ENCODE measurements at regions of chr10 and their contacts with region 1.

Region 1: DNA sequence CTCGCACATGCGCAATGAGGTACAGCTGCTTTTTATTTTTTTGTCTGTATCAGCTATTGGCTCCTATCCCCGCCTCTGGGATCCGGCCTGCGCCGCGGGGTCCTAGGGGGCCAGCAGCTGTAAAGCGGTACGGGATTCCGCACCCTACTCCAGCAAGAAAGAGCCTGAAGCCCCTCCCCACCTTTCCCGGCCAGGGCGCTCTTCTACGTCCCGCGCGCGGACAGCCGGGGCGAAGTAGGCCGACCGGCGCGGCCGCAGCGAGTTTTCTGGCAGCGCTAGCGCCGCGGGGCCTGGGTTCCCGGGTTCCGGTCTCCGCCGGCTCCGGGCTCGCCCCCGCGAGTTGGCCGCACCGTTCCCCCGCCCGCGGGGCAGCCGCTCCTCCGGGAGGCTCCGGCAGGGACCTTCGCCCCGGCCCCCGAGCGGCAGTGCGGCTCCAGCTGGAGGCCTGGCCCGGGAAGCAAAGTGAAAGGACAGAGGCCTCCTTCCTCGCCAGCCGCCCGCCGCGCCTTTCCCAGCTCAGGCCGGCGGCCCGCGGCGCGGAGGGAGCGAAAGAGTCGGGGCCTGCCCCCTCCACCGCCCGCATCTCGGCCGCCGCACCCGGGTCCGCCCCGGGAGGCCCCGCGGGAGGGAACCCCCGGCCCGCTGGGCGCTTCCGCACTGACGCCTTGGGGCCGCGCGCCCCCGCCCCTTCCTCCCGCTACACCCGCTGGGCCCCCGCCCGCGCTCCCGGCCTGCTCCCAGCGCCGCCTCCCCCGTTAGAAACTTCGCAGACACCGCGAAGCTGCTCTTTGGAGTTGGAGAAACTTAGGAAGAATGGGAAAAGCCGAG is 4.7 kb upstream of the SPAG6 start:
- DNase-seq: peak; percentile 66
- H3K4me3 ChIP-seq: peak overlapping the region; percentile 78
- H3K27ac ChIP-seq: peak overlapping the region; percentile 86
- H3K4me1 ChIP-seq: peaks cover 10% of the 10 kb centered on the region
- H3K27me3 ChIP-seq: peaks cover 76% of the 10 kb centered on the region
- CTCF ChIP-seq: no peak

Region 2: DNA sequence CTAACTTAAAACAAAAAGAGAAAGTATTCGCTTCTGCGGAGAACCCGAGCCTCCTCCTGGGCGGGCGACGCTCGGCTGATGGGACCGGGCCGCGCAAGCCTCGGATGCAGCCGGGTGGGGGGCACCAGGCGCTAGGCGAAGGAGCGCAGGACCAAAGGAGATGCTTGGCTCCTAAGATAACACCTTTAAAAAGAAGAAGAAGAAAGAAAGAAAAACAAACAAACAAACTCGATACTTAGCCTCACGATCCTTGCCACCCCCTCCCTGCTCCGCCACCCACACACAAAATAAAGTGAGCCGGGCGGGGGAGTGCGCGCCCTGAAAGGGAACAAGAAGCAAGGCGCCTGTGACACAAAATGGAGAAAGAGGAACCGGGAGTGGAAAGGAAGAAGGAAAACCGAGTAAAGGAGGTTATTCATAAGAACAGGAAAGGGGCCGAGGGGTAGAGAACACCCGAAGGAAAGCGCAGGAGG is 88.8 kb before region 1 on chr10:
- intact Hi-C with region 1: loop called (anchors 10 kb)
- DNase-seq: peak; percentile 59
- H3K4me3 ChIP-seq: peak overlapping the region; percentile 75
- H3K27ac ChIP-seq: peak overlapping the region; percentile 91
- H3K4me1 ChIP-seq: no peaks in the 10 kb centered on the region
- H3K27me3 ChIP-seq: peaks cover 7% of the 10 kb centered on the region
- CTCF ChIP-seq: no peak

Region 3: DNA sequence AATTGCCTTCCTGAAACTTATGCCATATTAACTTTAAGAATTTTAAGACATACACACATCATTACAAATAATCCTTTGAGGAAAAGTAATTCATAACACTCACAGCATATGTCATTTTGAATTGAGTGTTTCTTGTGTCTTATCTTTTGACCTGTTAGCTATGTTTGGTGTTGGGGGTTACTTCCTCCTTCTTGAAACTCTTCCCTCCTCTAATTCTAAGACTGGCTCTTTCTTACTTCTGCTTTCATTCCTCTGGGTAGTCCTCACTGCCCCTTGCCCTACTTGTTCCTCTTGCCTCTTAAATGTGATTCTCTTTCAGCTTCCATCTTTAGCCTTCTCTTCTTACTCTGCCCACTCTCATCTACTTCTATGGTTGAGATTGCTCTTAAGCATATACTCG is 402.1 kb after region 1 on chr10:
- intact Hi-C with region 1: no loop called
- DNase-seq: no peak
- H3K4me3 ChIP-seq: no peak overlapping the region
- H3K27ac ChIP-seq: no peak overlapping the region
- H3K4me1 ChIP-seq: no peaks in the 10 kb centered on the region
- H3K27me3 ChIP-seq: no peaks in the 10 kb centered on the region
- CTCF ChIP-seq: no peak

Measured in colonic mucosa (tissue), 4 donors.